B cell (primary cell): ENCODE measurements at regions of chr16 and their contacts with region 1.

Region 1: DNA sequence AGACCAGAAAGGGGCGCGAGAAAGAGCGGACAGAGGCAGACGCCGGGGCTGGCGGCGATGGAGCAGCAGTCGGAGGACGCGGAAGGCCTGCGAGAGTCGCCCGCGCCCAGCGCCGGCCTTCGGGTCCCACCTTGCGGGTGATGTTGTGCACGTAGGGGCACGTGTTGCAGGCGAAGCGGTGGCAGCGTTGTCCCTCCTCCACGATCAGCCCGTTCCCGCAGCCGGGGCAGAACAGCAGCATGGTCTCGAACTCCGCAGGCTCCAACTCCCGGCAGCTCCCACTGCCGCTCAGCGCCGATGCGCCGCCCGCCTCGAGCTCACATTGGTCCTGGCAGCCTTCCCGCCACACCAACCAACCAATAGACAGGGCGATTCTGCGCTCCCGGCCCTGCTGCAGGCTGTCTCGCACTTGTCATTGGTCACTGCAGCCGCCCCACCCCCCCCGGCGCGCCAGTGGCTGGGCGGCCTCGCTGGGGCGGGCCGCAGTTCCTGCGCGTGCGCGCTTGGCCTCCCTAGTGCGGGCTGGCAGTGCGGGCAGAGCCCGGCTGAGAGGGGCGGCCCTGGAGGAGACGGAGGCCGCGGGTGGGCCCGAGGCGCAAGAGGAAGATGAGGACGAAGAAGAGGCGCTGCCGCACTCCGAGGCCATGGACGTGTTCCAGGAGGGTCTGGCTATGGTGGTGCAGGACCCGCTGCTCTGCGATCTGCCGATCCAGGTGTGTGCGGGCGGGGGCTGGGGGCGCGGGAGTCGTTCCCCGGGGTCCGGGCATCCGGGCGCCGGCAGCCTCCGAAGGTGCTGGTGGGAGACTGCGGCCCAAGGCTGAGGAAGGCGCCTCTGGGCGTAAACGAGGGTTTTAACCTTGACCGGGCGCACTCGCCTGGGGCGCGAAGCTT is at the starts of genes POLR3K and SNRNP25:
- DNase-seq: peak; percentile 97
- ATAC-seq: peak; percentile 95
- H3K4me3 ChIP-seq: peak within 1 kb of the TSS; percentile 69 to 87 (median 82)
- H3K4me3 Mint-ChIP-seq: peak within 1 kb of the TSS; percentile 97
- H3K27ac ChIP-seq: peak within 1 kb of the TSS; percentile 52 to 82
- H3K27ac Mint-ChIP-seq: peak within 1 kb of the TSS; percentile 92
- H3K4me1 ChIP-seq: peaks cover 13 to 33% of the 10 kb centered on the region in 2 donors
- H3K4me1 Mint-ChIP-seq: peaks cover 31% of the 10 kb centered on the region
- H3K27me3 ChIP-seq: no peaks in the 10 kb centered on the region
- H3K27me3 Mint-ChIP-seq: no peaks in the 10 kb centered on the region
- CTCF ChIP-seq: no peak
- total RNA-seq, gene POLR3K: 28.3 and 34.9 TPM in 2 replicates
- total RNA-seq, gene SNRNP25: 24.3 and 25.5 TPM in 2 replicates

Region 2: DNA sequence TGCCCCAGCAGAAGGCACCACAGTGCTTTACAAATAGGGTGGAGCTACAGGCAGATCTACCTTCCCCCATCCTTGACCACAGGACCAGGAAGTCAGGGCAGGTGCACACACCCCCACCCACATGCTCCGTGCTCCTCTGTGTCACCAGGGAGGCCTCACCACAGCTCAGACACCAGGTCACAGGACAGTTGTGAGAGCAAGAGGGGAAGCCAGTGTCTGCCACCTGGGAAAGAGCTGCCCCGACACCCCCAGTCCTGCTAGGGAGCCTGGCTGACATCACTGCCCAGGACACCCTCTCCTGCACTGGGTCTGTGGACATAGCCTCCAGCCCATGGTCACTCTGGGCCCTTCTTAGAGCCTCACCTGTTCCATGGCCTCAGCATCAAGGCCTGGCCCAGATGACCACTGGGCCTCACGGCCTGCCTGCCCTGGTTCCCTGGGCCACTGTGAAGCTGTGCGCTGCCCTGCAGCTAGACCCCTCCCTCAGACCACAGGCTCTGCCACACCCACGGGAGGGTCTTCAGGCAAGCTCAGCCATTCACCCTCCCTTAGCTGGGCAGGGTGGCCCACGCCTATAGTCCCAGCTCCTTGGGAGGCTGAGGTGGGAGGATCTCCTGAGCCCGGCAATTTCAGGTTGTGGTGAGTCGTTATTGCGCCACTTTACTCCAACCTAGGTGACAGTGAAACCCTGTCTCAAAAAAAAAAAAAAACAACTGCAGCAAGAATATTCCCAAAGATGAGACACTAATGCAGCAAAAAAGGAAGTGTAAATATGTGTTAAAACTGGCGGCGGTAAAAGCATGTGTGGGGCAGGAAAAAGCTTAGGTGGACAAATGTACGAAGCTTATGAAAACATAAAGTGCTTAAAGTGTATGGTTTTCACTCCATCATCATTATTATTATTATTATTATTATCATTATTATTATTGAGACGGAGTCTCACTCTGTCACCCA is 14.4 kb before region 1 on chr16:
- CTCF ChIA-PET with region 1: interaction called, 30 read pairs
- POLR2A ChIA-PET with region 1: interaction called, 23 read pairs
- intact Hi-C with region 1: loop called (anchors 1 kb)
- DNase-seq: peak; percentile 93
- ATAC-seq: peak; percentile 86
- H3K4me3 ChIP-seq: peak overlapping the region in 1 of 5 experiments; percentile 39
- H3K4me3 Mint-ChIP-seq: peak overlapping the region; percentile 75
- H3K27ac ChIP-seq: peak overlapping the region; percentile 91 to 99
- H3K27ac Mint-ChIP-seq: peak overlapping the region; percentile 94
- H3K4me1 ChIP-seq: peaks cover 57 to 69% of the 10 kb centered on the region in 2 donors
- H3K4me1 Mint-ChIP-seq: peaks cover 73% of the 10 kb centered on the region
- H3K27me3 ChIP-seq: no peaks in the 10 kb centered on the region
- H3K27me3 Mint-ChIP-seq: no peaks in the 10 kb centered on the region
- CTCF ChIP-seq: no peak

Region 3: GRCh38 chr16:265711-266110 is 212.1 kb after region 1 on chr16:
- CTCF ChIA-PET with region 1: no interaction called
- POLR2A ChIA-PET with region 1: no interaction called
- intact Hi-C with region 1: no loop called
- DNase-seq: no peak
- ATAC-seq: no peak
- H3K4me3 ChIP-seq: no peak overlapping the region
- H3K4me3 Mint-ChIP-seq: no peak overlapping the region
- H3K27ac ChIP-seq: no peak overlapping the region
- H3K27ac Mint-ChIP-seq: peak overlapping the region; percentile 26
- H3K4me1 ChIP-seq: no peaks in the 10 kb centered on the region
- H3K4me1 Mint-ChIP-seq: no peaks in the 10 kb centered on the region
- H3K27me3 ChIP-seq: no peaks in the 10 kb centered on the region
- H3K27me3 Mint-ChIP-seq: no peaks in the 10 kb centered on the region
- CTCF ChIP-seq: no peak

Region 4: DNA sequence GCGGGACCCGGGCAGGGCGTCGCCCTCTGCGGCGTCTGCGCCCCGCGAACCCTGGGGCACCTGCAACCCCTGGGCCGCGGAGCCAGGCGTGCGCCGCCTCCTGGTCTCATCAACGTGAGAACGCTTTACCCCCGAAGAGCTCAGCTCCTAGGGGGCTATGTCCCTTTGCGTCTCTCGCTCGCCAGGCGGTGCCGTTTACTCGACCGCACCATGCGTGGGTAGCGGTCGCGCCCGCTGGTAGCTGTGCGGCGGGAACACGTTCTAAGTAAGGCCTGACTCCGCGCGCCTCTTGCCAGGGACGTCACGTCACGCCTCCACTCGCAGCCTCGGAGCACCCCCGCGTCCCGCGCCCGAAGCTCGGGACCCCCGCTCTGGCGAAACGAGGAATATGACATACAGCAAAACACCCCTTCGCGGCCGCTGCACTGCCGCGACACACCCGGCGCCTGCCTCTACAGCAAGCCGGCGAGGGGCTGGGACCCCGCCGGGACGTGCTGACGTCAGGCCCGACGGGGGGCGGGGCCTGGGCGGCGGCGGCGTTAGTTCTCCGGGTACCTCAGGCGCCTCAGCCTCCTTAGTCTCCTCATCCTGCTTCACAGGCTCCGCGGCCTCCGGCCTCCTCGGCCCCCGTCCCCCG is 371.6 kb after region 1 on chr16 and contains the start of gene RAB11FIP3:
- CTCF ChIA-PET with region 1: no interaction called
- POLR2A ChIA-PET with region 1: no interaction called
- intact Hi-C with region 1: no loop called
- DNase-seq: peak; percentile 92
- ATAC-seq: peak; percentile 91
- H3K4me3 ChIP-seq: peak within 1 kb of the TSS in 4 of 5 experiments; percentile 52 to 71 (median 71)
- H3K4me3 Mint-ChIP-seq: peak within 1 kb of the TSS; percentile 93
- H3K27ac ChIP-seq: peak within 1 kb of the TSS; percentile 51 to 92
- H3K27ac Mint-ChIP-seq: peak within 1 kb of the TSS; percentile 91
- H3K4me1 ChIP-seq: peaks cover 16 to 22% of the 10 kb centered on the region in 2 donors
- H3K4me1 Mint-ChIP-seq: peaks cover 25% of the 10 kb centered on the region
- H3K27me3 ChIP-seq: peaks cover 0 to 14% (median 2%) of the 10 kb centered on the region in 4 experiments
- H3K27me3 Mint-ChIP-seq: peaks cover 9% of the 10 kb centered on the region
- CTCF ChIP-seq: peak; percentile 49
- total RNA-seq, gene RAB11FIP3: 57.2 and 60.6 TPM in 2 replicates